ENCODE measurements at regions of chr6 and their contacts with region 1.

Region 1: DNA sequence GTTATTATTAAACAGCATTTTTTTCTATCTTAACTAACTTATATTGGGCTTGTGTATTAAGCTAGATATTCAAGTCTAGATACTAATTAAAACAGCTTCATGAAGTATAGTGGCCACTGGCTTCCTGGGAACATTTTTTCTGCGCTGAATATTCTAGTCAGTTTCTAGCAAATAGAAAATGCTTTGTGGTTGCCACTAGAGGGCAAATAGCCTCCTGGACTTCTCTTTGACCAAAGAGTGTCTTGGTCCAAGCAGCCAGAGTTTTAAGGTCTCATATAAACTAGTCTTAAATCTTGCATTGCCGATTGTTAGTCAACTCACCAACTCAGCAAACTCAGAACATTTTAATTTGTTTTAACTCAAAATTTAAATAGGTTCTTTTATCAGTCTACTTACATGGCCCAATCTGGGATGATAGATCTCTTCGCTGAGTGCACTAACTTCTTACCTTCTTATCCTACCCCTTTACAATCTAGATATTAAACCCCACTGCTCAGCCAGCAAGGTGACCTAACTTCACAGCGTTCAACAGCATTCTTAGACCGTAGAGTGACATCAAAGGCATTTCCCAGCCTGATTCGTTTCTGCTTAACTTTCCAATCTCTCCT is 24.6 kb upstream of the ID4 start:
- DNase-seq: no peak
- ATAC-seq: peak; percentile 44 to 68 (median 62)
- H3K4me3 ChIP-seq: no peak overlapping the region
- H3K27ac ChIP-seq: no peak overlapping the region
- H3K4me1 ChIP-seq: no peaks in the 10 kb centered on the region
- H3K27me3 ChIP-seq: no peaks in the 10 kb centered on the region
- CTCF ChIP-seq: peak; percentile 67

Region 2: DNA sequence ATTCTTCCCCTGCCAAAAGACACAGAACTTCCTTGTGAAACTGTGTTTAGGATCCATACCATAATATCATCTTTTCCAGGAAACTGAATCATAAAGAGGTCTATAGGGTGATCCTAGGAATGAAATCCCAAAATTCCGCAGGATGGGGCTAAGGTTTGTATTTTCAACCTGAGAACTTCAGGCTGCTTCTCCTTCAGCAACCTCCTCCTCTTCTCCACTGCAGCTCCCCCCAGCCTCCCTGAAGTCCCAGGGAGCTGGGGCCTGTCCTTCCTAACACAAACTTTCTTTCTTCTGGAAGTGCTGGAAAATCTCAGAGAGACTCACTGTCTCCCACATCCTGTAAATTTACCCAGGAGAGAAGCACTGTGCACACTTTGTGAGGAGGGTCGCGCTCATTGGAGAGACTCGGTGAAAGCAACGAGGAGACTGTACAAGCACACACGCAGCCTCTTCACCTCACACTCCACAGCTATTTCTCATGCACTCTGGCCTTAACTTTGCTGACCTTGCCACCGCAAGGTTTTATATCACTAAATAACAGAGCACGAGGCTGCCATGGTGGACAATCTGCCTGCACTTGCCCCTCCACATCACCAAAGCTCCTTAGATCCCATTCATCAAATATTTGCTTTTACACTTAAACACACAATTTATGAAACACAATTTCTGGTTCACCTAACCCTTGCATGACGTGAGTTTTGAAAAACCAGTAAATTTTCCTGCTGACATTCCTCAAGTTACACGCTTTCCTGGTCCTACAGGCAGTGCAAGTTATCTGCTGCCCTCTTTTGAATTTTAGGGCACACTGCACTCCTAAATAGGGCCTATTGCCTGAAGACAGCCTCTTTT is 38.8 kb after region 1 on chr6:
- intact Hi-C with region 1: loop called in 1 of 2 experiments (anchors 5 kb)
- DNase-seq: no peak
- ATAC-seq: peak; percentile 73 to 84 (median 79)
- H3K4me3 ChIP-seq: no peak overlapping the region
- H3K27ac ChIP-seq: no peak overlapping the region
- H3K4me1 ChIP-seq: no peaks in the 10 kb centered on the region
- H3K27me3 ChIP-seq: no peaks in the 10 kb centered on the region
- CTCF ChIP-seq: peak; percentile 88

Region 3: GRCh38 chr6:20056350-20056992 is 243.9 kb after region 1 on chr6:
- intact Hi-C with region 1: loop called in 1 of 2 experiments (anchors 10 kb)
- DNase-seq: no peak
- ATAC-seq: no peak
- H3K4me3 ChIP-seq: no peak overlapping the region
- H3K27ac ChIP-seq: no peak overlapping the region
- H3K4me1 ChIP-seq: no peaks in the 10 kb centered on the region
- H3K27me3 ChIP-seq: no peaks in the 10 kb centered on the region
- CTCF ChIP-seq: peak; percentile 37

Measured in psoas muscle (tissue), 8 donors.